ENCODE measurements at regions of chr5 and their contacts with region 1.

Region 1: DNA sequence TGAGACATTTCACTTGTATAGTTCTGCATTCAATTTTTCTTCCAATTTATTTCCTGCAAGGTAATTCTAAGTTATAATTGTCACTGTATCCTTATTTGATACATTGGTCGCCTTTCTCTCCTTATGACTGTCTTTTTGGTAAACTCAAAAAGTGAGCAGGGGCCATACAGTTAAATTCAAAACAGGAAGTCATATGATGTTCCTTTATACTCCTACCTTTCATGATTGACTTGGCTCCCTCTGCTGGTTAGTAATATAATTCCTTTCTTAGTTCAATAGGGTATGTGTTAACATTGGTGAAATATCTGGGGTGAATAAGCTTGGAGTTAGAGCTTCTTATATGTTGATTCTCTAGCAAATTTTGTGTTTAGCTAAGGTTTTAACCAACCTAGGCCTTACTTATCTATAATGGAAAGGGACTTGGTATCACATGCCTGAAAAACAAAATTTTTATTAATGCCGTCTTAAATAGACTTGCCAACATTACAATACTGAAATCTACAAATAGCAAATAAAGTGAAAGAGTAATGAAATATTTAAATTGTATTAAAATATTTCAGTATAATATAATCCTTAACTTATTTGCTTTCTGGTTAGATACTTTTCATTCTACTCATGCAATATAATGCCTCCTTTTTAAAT is 6.0 kb upstream of the NIPBL start:
- DNase-seq: peak; percentile 42 to 82 (median 60)
- ATAC-seq: peak; percentile 67
- H3K4me3 ChIP-seq: no peak overlapping the region
- H3K27ac ChIP-seq: no peak overlapping the region
- H3K4me1 ChIP-seq: peaks cover 0 to 3% of the 10 kb centered on the region in 2 experiments; a peak in 3 of 5 replicates
- H3K27me3 ChIP-seq: no peaks in the 10 kb centered on the region
- CTCF ChIP-seq: peak; percentile 64 to 86 (median 68); a peak in 5 of 6 replicates
- EP300 ChIP-seq: 0 out of 2 replicates have a peak, but pooled peaks have one; percentile 24
- POLR2A ChIP-seq: 0 out of 2 replicates have a peak, but pooled peaks have one; percentile 19
- RAD21 ChIP-seq: peak; percentile 83 to 85

Region 2: DNA sequence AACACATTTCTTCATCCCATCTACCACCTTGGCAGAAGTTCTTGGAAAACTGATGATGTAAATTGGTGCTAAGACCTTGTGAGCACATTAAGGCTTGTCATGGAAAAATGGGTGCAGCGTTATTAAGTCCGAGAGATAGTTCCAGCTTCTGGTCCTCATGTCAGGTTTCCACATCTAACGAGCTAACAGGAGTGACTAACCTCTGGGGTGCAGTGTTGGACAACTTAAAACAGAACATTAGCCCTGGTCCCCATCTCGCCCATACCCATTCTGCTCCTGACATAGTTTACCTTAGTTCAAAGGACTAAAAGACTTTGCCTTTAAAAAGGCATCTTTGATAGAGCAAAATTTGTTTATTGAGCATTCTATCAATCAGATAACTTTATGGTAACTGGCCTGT is 136.1 kb before region 1 on chr5:
- CTCF ChIA-PET with region 1: interaction called, 12 read pairs
- POLR2A ChIA-PET with region 1: interaction called, 7 read pairs
- in situ Hi-C with region 1: loop called (anchors 5 kb)
- intact Hi-C with region 1: loop called (anchors 1 kb)
- DNase-seq: peak in 2 of 4 experiments; percentile 34 to 70
- ATAC-seq: peak; percentile 86
- H3K4me3 ChIP-seq: no peak overlapping the region
- H3K27ac ChIP-seq: no peak overlapping the region
- H3K4me1 ChIP-seq: peaks cover 0 to 7% of the 10 kb centered on the region in 2 experiments; a peak in 4 of 5 replicates
- H3K27me3 ChIP-seq: peaks cover 2 to 5% of the 10 kb centered on the region in 2 experiments; a peak in 2 of 5 replicates
- CTCF ChIP-seq: peak; percentile 33 to 67 (median 58); a peak in 5 of 6 replicates
- EP300 ChIP-seq: no peak
- POLR2A ChIP-seq: no peak
- RAD21 ChIP-seq: peak; percentile 77 to 80

Region 3: GRCh38 chr5:36820900-36821299 is 49.6 kb before region 1 on chr5:
- CTCF ChIA-PET with region 1: no interaction called
- POLR2A ChIA-PET with region 1: no interaction called
- in situ Hi-C with region 1: no loop called
- intact Hi-C with region 1: loop called (anchors 5 kb)
- DNase-seq: peak in 2 of 4 experiments; percentile 60 to 78
- ATAC-seq: peak; percentile 100
- H3K4me3 ChIP-seq: no peak overlapping the region
- H3K27ac ChIP-seq: peak overlapping the region; percentile 58; the same call in 2 of the 3 replicates
- H3K4me1 ChIP-seq: no peaks in the 10 kb centered on the region; a peak in 1 of 5 replicates
- H3K27me3 ChIP-seq: no peaks in the 10 kb centered on the region
- CTCF ChIP-seq: no peak
- EP300 ChIP-seq: peak; percentile 84
- POLR2A ChIP-seq: no peak
- RAD21 ChIP-seq: no peak

Region 4: GRCh38 chr5:37412515-37413277 is 542.2 kb after region 1 on chr5:
- CTCF ChIA-PET with region 1: no interaction called
- POLR2A ChIA-PET with region 1: no interaction called
- in situ Hi-C with region 1: no loop called
- intact Hi-C with region 1: no loop called
- DNase-seq: peak; percentile 80 to 86 (median 84)
- ATAC-seq: peak; percentile 98
- H3K4me3 ChIP-seq: no peak overlapping the region
- H3K27ac ChIP-seq: no peak overlapping the region
- H3K4me1 ChIP-seq: no peaks in the 10 kb centered on the region
- H3K27me3 ChIP-seq: no peaks in the 10 kb centered on the region
- CTCF ChIP-seq: peak; percentile 95 to 100 (median 99)
- EP300 ChIP-seq: 0 out of 2 replicates have a peak, but pooled peaks have one; percentile 40
- POLR2A ChIP-seq: no peak
- RAD21 ChIP-seq: peak; percentile 91 to 99